HAP-1 (cell line): ENCODE measurements at regions of chr7 and their contacts with region 1.

Region 1: DNA sequence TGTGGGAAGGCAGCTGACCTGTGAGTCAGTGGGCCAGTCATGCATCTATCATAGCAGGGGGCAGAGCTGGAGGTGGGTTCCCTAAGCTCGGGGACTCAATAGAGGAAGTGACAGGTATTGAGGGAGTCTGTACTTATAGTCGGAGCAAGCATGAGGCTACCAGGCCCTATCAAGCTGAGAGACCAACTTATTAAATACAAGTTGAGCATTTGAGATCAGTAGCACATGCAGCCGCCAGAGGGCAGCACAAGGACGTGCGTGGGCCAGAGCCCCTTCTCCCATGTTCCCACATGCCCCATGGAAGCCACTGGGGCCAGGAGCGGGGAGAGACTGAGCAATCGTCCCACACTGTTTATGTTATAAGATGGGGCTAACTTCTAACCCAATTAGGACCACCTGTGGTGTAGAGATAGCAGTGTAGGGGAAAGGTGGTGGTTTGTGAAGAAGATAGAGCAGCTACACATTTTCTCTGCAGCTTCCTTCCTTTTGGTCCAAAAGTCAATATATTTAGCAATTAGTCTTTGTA is 13.0 kb upstream of the STK31 start:
- DNase-seq: peak; percentile 74 to 90
- H3K4me3 ChIP-seq: no peak overlapping the region
- H3K4me1 ChIP-seq: no peaks in the 10 kb centered on the region; the same call in 1 of the 2 replicates
- H3K27me3 ChIP-seq: no peaks in the 10 kb centered on the region

Region 2: DNA sequence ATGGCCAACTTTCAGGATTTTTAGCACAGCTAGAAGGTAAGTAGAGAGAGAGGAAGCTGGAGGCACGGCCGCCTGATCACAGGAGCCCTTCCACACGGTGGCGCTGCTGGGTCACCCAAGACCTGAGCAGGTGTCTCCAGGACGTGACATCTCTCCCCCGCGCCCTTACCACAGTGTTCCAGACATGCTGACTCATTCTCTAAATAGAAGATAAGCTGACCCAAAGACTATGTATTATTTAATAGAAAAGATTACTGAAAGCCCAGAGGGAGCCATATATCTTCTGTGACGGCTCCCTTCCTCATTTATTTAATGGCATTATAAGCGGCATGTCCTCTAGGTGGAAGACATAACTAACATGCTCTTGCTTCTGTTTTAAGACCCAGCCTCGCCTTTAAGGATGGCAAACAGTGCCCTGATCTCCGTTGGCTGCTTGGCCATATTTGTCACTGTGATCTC is 423.8 kb before region 1 on chr7:
- in situ Hi-C with region 1: loop called (anchors 10 kb)
- DNase-seq: peak; percentile 90 to 97
- H3K4me3 ChIP-seq: peak overlapping the region; percentile 16
- H3K4me1 ChIP-seq: peaks cover 11% of the 10 kb centered on the region
- H3K27me3 ChIP-seq: no peaks in the 10 kb centered on the region

Region 3: GRCh38 chr7:23570592-23571200 is 126.3 kb before region 1 on chr7:
- in situ Hi-C with region 1: loop called (anchors 5 kb)
- DNase-seq: peak; percentile 65 to 85
- H3K4me3 ChIP-seq: no peak overlapping the region
- H3K4me1 ChIP-seq: no peaks in the 10 kb centered on the region
- H3K27me3 ChIP-seq: no peaks in the 10 kb centered on the region

Region 4: GRCh38 chr7:25109276-25109675 is 1412.3 kb after region 1 on chr7:
- in situ Hi-C with region 1: no loop called
- DNase-seq: no peak
- H3K4me3 ChIP-seq: no peak overlapping the region
- H3K4me1 ChIP-seq: no peaks in the 10 kb centered on the region
- H3K27me3 ChIP-seq: no peaks in the 10 kb centered on the region